Activated T-helper 1 cell treated with anti-CD3 and anti-CD28 coated beads, Interleukin-12 subunit alpha, Interleukin-12 subunit beta, Interleukin-2, Interleukin-4 antibody, amounts not matched to agents 30 ng/mL and 10 ng/mL and 1 ng/mL, durations not matched to agents 14 hours and 24 hours and 36 hours (primary cell): ENCODE measurements at regions of chr22 and their contacts with region 1.

Region 1: GRCh38 chr22:45413368-45414211 is at the starts of genes RIBC2 and SMC1B:
- DNase-seq: peak; percentile 85
- H3K4me3 Mint-ChIP-seq: peak within 1 kb of the TSS; percentile 88
- H3K27ac Mint-ChIP-seq: peak within 1 kb of the TSS; percentile 94
- H3K4me1 Mint-ChIP-seq: peaks cover 13% of the 10 kb centered on the region
- H3K27me3 Mint-ChIP-seq: no peaks in the 10 kb centered on the region
- total RNA-seq, gene RIBC2: 10.6 and 12.6 TPM in 2 replicates
- total RNA-seq, gene SMC1B: 0.44 and 0.83 TPM in 2 replicates

Region 2: GRCh38 chr22:45435544-45436139 is 22.1 kb after region 1 on chr22:
- intact Hi-C with region 1: loop called (anchors 1 kb)
- DNase-seq: peak; percentile 71
- H3K4me3 Mint-ChIP-seq: no peak overlapping the region
- H3K27ac Mint-ChIP-seq: peak overlapping the region; percentile 29
- H3K4me1 Mint-ChIP-seq: peaks cover 14% of the 10 kb centered on the region
- H3K27me3 Mint-ChIP-seq: peaks cover 8% of the 10 kb centered on the region